T-cell (primary cell): ENCODE measurements at regions of chr17 and their contacts with region 1.

Region 1: DNA sequence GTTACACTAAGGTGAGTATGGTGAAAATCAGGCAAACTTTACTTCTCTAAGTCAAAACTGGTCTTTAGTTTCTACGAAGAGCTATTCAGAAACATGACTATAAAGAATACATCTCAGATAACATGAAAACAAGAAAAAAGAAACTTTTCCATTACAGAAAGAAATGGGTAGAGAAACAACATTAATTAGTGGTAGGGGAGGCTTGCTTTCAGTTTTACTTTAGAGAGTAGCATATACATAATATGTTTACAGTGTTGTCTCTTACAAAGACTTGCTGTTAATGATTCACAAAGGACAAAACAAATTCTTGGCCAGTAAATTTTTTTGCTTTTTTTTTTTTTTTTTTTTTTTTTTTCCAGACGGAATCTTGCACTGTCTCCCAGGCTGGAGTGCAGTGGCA is 34.2 kb downstream of the CRLF3 start:
- DNase-seq: no peak
- ATAC-seq: no peak
- H3K4me3 ChIP-seq: no peak overlapping the region
- H3K4me3 Mint-ChIP-seq: peak overlapping the region in 1 of 3 donors; percentile 14
- H3K27ac ChIP-seq: peak overlapping the region; percentile 46
- H3K27ac Mint-ChIP-seq: peak overlapping the region; percentile 87 to 94
- H3K4me1 ChIP-seq: no peaks in the 10 kb centered on the region
- H3K4me1 Mint-ChIP-seq: peaks cover 10 to 18% (median 11%) of the 10 kb centered on the region in 3 donors
- H3K27me3 ChIP-seq: no peaks in the 10 kb centered on the region
- H3K27me3 Mint-ChIP-seq: no peaks in the 10 kb centered on the region

Region 2: GRCh38 chr17:29791336-29792080 is 998.8 kb before region 1 on chr17:
- CTCF ChIA-PET with region 1: no interaction called
- POLR2A ChIA-PET with region 1: interaction called in 1 of 2 experiments, 10 read pairs
- DNase-seq: no peak
- ATAC-seq: no peak
- H3K4me3 ChIP-seq: no peak overlapping the region
- H3K4me3 Mint-ChIP-seq: no peak overlapping the region
- H3K27ac ChIP-seq: no peak overlapping the region
- H3K27ac Mint-ChIP-seq: no peak overlapping the region
- H3K4me1 ChIP-seq: no peaks in the 10 kb centered on the region
- H3K4me1 Mint-ChIP-seq: no peaks in the 10 kb centered on the region
- H3K27me3 ChIP-seq: no peaks in the 10 kb centered on the region
- H3K27me3 Mint-ChIP-seq: no peaks in the 10 kb centered on the region